Cardiac septum (tissue), 1 donor: ENCODE measurements at regions of chr17 and their contacts with region 1.

Region 1: GRCh38 chr17:67717624-67718329 is at the start of gene NOL11:
- DNase-seq: peak; percentile 100
- total RNA-seq, gene NOL11: 22.0 TPM

Region 2: GRCh38 chr17:67824735-67825626 is 107.2 kb after region 1 on chr17 and contains the start of gene BPTF:
- intact Hi-C with region 1: loop called (anchors 2 kb)
- DNase-seq: peak; percentile 97
- total RNA-seq, gene BPTF: 72.9 TPM

Region 3: DNA sequence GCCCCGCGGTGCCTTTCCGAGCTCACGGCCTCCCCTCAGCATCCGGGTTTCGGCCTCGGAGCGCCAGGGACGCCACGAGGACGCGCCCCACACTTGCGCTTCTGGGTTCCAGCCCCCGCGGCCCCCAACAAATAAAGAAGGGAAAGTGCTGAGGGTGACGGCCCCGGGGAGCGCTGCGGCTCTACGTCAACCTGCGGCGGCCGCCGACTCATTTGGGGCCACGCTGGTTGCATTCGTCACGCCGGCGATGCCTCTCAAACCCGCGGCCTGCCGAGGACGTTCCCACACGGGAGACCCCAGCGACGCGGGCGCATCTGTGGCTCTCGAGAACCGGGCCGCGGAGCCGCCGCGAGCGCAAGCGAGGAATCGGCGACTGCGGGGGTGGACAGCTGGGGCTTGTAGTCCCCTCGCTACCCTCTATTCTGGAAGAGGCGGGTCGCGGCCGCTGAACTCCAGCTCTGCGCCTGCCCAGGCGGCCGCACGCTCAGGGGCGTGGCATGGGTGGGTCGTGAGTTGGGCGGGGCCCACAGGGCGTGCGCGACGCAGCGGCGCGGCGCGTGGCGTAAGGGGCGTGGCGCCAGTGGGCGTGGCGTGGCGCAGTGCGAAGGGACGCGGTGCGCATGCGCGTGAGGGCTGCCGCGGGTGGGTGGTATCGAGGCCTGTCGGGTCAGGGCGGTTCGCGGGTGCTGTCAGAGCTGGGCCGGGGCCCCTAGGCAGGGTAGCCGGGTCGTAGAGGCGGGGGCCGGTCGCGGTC is 529.8 kb after region 1 on chr17 and contains the start of gene AMZ2:
- intact Hi-C with region 1: loop called (anchors 5 kb)
- DNase-seq: peak; percentile 98
- total RNA-seq, gene AMZ2: 97.4 TPM